CD4-positive, alpha-beta memory T cell (primary cell): ENCODE measurements at regions of chr20 and their contacts with region 1.

Region 1: DNA sequence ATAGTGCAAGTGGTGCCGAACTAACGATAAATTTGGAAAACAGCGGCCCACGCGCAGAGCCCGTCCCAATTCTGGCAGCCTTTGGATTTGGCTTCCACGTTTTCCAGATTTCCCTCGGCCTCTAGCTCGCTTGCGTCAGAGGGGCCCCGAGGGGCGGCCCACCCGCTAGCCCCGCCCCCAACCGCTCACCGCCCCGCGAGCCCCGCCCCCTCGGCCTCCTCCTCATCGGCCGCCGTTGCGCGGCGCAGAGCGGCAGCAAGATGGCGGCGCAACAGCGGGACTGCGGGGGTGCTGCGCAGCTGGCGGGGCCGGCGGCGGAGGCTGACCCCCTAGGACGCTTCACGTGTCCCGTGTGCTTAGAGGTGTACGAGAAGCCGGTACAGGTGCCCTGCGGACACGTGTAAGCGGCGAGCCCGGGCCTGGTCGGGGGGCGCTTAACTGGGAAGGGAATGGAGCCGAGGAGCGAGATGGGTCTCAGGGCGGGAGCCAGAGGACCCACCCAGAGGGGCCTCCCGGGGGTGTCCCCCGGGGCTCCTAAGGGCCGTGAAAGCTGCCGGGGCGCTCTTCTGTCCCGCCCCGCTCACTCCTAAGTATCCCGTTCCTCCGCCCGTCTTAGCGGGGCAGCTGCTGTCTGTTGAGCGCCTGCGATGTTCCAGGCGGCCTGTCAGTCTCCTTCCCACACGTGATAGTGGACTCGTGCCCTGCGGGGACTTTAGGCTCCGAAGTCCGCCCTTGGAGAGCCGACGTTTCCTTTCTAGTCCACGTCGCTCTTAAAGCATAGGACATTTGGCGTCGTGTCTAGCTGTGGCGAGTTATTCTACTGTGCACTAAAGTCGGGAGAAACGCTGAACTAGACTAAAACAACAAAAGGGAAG is at the start of gene RNF114:
- DNase-seq: peak; percentile 85 to 87 (median 86)
- H3K4me3 ChIP-seq: peak within 1 kb of the TSS; percentile 88 to 100
- H3K4me3 Mint-ChIP-seq: peak within 1 kb of the TSS; percentile 97 to 99 (median 98)
- H3K27ac ChIP-seq: peak within 1 kb of the TSS; percentile 88
- H3K27ac Mint-ChIP-seq: peak within 1 kb of the TSS; percentile 83 to 98 (median 95)
- H3K4me1 ChIP-seq: peaks cover 40% of the 10 kb centered on the region
- H3K4me1 Mint-ChIP-seq: peaks cover 38 to 50% (median 43%) of the 10 kb centered on the region in 4 donors
- H3K27me3 ChIP-seq: no peaks in the 10 kb centered on the region
- H3K27me3 Mint-ChIP-seq: no peaks in the 10 kb centered on the region
- total RNA-seq, gene RNF114: 96.3 to 101 TPM

Region 2: GRCh38 chr20:49812463-49813304 is 123.7 kb before region 1 on chr20 and contains the start of gene SLC9A8:
- CTCF ChIA-PET with region 1: no interaction called
- POLR2A ChIA-PET with region 1: interaction called, 13 read pairs
- intact Hi-C with region 1: loop called (anchors 2 kb)
- DNase-seq: peak; percentile 76 to 94 (median 82)
- H3K4me3 ChIP-seq: peak within 1 kb of the TSS; percentile 62 to 66
- H3K4me3 Mint-ChIP-seq: peak within 1 kb of the TSS; percentile 92 to 98 (median 96)
- H3K27ac ChIP-seq: peak within 1 kb of the TSS; percentile 93
- H3K27ac Mint-ChIP-seq: peak within 1 kb of the TSS; percentile 98 to 99 (median 99)
- H3K4me1 ChIP-seq: peaks cover 23% of the 10 kb centered on the region
- H3K4me1 Mint-ChIP-seq: peaks cover 22 to 50% (median 32%) of the 10 kb centered on the region in 4 donors
- H3K27me3 ChIP-seq: no peaks in the 10 kb centered on the region
- H3K27me3 Mint-ChIP-seq: no peaks in the 10 kb centered on the region
- total RNA-seq, gene SLC9A8: 24.4 to 25.6 TPM